ENCODE measurements at regions of chr12 and their contacts with region 1.

Region 1: DNA sequence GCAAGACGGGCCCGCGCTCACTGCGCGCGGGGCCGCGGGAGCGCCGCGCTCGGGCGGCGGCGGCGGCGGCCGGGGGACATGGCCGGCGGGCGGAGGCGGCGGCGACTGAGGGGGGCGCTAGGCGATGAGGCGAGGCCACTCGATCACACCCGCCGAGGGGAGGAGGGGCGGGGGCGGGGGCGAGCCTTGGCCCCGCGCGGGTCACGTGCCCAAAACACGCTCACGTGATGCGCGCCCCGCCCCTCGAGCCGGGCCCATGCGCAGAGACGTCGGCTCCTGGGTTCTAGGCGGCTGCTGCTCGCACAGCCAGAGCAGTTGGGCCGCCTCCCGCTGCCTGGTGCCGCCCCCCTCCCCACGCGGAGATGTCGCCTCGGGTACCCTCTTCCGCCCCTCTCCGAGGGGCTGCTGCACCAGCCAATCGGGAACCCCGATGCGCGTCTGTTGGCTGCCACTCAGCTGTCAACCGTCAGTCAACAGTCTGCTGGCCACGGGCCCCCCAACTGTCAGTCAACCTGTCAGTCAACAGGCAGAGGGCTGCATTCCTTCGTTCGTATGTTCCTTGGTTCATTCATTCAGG is at the start of gene SPPL3:
- DNase-seq: peak; percentile 96
- ATAC-seq: peak; percentile 80
- H3K4me3 Mint-ChIP-seq: peak within 1 kb of the TSS; percentile 97
- H3K27ac Mint-ChIP-seq: peak within 1 kb of the TSS; percentile 91
- H3K4me1 Mint-ChIP-seq: peaks cover 30% of the 10 kb centered on the region
- H3K27me3 Mint-ChIP-seq: no peaks in the 10 kb centered on the region
- CTCF ChIP-seq: no peak
- total RNA-seq, gene SPPL3: 39.9 and 40.3 TPM in 2 replicates

Region 2: DNA sequence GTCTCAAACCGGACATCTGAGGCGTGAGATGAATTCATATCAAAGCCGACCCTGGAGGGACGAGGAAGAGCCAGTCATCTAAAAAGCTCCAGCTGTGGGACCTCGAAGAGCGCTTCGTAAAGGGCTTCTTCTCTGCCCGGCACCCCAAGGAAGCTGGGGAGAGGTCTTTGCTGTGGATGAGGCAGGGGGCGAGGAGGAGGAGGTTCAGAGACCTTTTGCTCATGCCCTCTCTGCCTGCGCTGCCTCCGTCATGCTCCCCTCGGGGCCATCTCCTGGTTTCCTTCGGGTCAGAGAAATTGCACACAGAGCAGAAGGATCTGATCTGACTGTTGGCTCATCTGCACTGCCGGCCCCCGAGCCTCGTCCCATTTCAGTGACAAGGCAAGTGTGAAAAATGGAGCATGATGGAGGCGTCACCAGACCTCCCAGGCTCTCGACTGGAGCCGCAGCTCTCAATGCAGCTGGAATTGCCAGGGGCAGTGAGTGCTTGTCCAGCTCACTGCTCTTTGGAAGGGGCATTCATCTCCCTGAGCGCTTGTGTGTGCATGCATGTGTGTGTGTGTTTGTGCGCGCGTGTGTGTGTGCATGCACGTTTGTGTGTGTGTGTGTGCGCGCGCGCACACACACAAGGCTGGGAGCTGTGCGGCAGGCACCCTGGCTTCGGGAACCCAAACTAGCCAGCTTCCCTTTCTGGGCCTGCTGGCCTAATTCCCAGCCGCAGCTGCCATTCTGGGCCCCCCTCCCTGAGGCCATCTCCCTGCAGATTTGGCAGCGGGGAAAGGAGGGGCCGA is 254.6 kb before region 1 on chr12:
- CTCF ChIA-PET with region 1: interaction called, 3 read pairs
- POLR2A ChIA-PET with region 1: no interaction called
- intact Hi-C with region 1: loop called (anchors 5 kb)
- DNase-seq: no peak
- ATAC-seq: no peak
- H3K4me3 Mint-ChIP-seq: peak overlapping the region; percentile 75
- H3K27ac Mint-ChIP-seq: peak overlapping the region; percentile 44
- H3K4me1 Mint-ChIP-seq: peaks cover 26% of the 10 kb centered on the region
- H3K27me3 Mint-ChIP-seq: peaks cover 48% of the 10 kb centered on the region
- CTCF ChIP-seq: peak; percentile 50

Region 3: DNA sequence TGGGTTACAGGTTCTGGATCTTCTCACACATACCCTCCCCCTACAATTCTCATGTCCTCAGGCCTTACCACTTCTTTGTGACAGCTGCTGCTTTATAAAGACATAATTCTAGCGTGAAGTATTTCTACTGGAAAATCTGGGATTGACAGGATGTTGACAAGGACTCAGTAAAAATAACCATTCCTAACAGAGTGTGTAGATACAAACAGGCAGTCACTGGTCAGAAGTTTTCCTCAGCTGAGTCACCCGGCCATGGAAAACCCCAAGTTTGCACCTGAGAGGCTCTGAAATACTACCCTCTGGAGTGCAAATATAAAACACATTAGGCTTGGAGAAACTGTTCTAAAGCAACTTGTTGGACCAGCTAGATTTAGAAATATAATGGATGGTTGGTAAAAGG is 54.5 kb before region 1 on chr12:
- CTCF ChIA-PET with region 1: interaction called, 6 read pairs
- POLR2A ChIA-PET with region 1: interaction called, 3 read pairs
- intact Hi-C with region 1: loop called (anchors 1 kb)
- DNase-seq: no peak
- ATAC-seq: no peak
- H3K4me3 Mint-ChIP-seq: peak overlapping the region; percentile 52
- H3K27ac Mint-ChIP-seq: peak overlapping the region; percentile 77
- H3K4me1 Mint-ChIP-seq: peaks cover 73% of the 10 kb centered on the region
- H3K27me3 Mint-ChIP-seq: no peaks in the 10 kb centered on the region
- CTCF ChIP-seq: no peak

Region 4: DNA sequence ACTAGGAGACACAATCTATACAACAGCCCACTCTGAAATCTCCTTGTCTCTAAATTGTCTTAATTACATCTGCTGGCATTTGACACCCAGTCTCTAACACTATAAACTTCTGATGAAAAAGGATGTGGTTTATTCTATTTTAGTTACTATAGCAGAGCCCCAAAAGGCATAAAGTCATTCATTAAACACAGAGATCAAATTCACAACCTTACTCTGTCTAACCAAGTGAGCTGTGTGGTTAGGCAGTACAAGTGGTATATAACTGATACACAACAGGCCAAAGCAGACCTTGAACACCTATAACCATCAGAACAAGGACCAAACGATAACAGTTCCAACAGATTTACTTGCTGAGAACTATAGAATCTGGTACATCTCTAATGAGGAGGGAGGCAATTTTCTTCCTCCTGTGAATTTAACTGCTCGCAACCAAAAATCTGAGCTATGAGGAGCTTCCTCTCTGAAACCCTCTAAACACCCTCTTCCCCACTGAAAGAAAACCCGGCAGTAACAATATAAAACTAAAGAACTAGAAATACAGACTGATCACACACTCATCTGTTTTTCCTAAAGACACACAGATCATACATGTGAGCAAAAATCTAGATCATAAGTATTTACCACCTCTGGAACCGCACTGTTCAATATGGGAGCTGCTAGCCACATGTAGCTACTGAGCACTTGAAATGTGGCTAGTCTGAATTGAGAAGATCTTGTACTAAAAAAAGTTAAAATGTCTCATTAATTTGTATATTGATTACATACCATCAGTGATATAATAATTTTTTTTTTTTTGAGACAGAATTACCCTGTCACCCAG is 17.9 kb before region 1 on chr12:
- CTCF ChIA-PET with region 1: no interaction called
- POLR2A ChIA-PET with region 1: interaction called, 11 read pairs
- intact Hi-C with region 1: loop called (anchors 2 kb)
- DNase-seq: no peak
- ATAC-seq: peak; percentile 76
- H3K4me3 Mint-ChIP-seq: peak overlapping the region; percentile 72
- H3K27ac Mint-ChIP-seq: peak overlapping the region; percentile 87
- H3K4me1 Mint-ChIP-seq: peaks cover 57% of the 10 kb centered on the region
- H3K27me3 Mint-ChIP-seq: no peaks in the 10 kb centered on the region
- CTCF ChIP-seq: no peak